AG04450 (cell line): ENCODE measurements at regions of chr1 and their contacts with region 1.

Region 1: DNA sequence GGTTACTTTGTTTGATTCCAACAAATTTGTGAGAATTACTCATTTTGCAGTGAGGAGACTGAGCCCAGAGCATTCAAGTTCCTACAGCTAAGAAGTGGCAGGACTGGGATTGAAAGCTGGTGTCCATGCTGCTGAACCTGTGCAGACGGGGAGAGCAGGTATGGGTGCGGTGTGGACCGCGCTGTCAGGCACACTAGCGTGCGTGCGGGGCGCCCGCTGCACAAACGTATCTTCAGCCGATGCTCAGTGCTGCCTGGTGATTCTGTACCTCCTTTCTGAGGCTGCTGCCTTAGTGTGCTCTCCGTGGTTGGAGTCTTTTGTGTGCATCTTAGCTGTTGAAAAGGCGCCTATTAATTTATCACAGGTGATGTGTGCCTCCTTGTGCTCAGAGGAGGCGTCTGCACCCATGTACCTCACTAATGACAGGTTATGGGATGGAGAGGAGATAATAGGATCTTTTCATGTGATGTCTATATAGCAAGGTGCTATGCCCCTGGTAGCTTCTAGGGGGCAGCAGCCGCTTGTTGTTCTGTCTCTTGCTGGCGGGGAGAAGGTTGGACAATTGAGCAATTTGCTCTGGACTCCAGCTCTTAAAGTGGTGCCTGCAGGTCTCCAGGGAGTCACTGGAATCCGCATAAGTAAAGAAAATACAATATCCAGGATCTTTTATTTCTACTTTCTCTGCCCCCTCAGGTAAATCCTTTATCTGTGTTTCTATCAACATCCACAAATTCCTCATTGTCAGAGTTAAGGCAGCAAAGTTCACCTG is 32.5 kb downstream of the PEX14 start:
- DNase-seq: no peak
- H3K4me3 ChIP-seq: no peak overlapping the region
- H3K27ac ChIP-seq: no peak overlapping the region
- H3K27me3 ChIP-seq: no peaks in the 10 kb centered on the region
- CTCF ChIP-seq: peak; percentile 92

Region 2: DNA sequence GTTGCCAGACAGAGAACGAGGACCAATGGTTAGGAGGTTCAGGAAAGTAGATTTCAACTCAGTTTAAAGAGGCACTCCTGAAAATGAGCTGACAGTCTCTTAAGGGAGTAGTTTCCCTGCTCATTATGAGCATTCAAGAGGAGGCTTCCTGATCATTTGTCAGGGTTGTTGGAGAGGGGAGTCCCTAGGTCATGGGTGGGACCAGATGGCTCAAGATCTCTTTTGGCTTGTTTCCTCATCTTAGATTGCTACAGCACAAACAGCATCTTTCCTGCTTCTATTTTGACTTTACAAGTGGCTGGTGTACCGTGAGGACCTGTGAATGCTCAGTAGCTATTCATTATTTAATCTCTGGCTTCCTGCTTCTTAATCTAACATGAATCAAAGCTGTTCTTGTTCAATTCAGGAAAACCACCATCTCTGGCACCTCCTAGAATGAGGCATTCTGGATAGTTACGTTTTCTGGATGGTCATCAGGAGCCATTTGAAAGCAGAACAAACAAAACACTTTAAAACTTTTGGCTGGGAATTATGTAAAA is 15.1 kb after region 1 on chr1:
- CTCF ChIA-PET with region 1: interaction called, 21 read pairs
- POLR2A ChIA-PET with region 1: interaction called, 3 read pairs
- DNase-seq: no peak
- H3K4me3 ChIP-seq: no peak overlapping the region
- H3K27ac ChIP-seq: no peak overlapping the region
- H3K27me3 ChIP-seq: no peaks in the 10 kb centered on the region
- CTCF ChIP-seq: no peak

Region 3: DNA sequence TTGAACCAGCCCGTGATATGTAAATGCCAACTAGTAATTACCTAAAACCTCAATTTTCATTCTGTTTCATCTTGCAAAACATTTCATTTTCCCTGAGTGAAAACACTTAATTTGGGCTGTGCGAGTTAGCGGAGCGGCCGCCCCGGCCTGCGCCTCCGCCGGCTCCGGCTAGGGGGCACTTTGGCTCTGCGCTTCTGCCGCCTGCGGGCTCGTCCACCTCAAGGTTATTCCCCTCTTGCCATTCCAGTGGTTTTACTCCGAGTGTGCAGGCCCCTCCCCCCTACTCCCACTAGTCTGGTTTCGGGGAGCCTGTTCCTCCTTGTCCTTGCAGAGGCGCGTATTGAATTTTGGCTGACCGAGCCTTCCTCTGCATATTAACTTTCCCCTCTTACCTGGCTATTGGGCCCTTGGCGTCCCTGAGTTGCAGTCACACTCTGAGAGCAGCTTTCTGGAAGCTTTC is 23.0 kb after region 1 on chr1:
- CTCF ChIA-PET with region 1: interaction called, 12 read pairs
- POLR2A ChIA-PET with region 1: interaction called, 4 read pairs
- DNase-seq: no peak
- H3K4me3 ChIP-seq: peak overlapping the region; percentile 52
- H3K27ac ChIP-seq: peak overlapping the region; percentile 81
- H3K27me3 ChIP-seq: no peaks in the 10 kb centered on the region
- CTCF ChIP-seq: peak; percentile 98

Region 4: GRCh38 chr1:10867138-10867721 is 359.9 kb after region 1 on chr1:
- CTCF ChIA-PET with region 1: interaction called, 34 read pairs
- POLR2A ChIA-PET with region 1: no interaction called
- DNase-seq: no peak
- H3K4me3 ChIP-seq: peak overlapping the region; percentile 57
- H3K27ac ChIP-seq: no peak overlapping the region
- H3K27me3 ChIP-seq: peaks cover 39% of the 10 kb centered on the region
- CTCF ChIP-seq: peak; percentile 21

Region 5: GRCh38 chr1:10941891-10942541 is 434.7 kb after region 1 on chr1:
- CTCF ChIA-PET with region 1: interaction called, 11 read pairs
- POLR2A ChIA-PET with region 1: no interaction called
- DNase-seq: no peak
- H3K4me3 ChIP-seq: no peak overlapping the region
- H3K27ac ChIP-seq: no peak overlapping the region
- H3K27me3 ChIP-seq: peaks cover 22% of the 10 kb centered on the region
- CTCF ChIP-seq: peak; percentile 86